CD14-positive monocyte (primary cell): ENCODE measurements at regions of chr2 and their contacts with region 1.

Region 1: GRCh38 chr2:74919827-74920226 is 38.6 kb upstream of the POLE4 start:
- DNase-seq: peak; percentile 47 to 59 (median 49)
- H3K4me3 ChIP-seq: peak overlapping the region in 1 of 3 experiments; percentile 51
- H3K4me3 Mint-ChIP-seq: peak overlapping the region; percentile 56 to 67
- H3K27ac ChIP-seq: no peak overlapping the region
- H3K27ac Mint-ChIP-seq: peak overlapping the region in 1 of 7 donors; percentile 12
- H3K4me1 ChIP-seq: peaks cover 41 to 47% of the 10 kb centered on the region in 2 donors
- H3K4me1 Mint-ChIP-seq: peaks cover 62% of the 10 kb centered on the region
- H3K27me3 ChIP-seq: no peaks in the 10 kb centered on the region
- H3K27me3 Mint-ChIP-seq: peaks cover 2 to 22% (median 11%) of the 10 kb centered on the region in 3 donors
- CTCF ChIP-seq: peak; percentile 93

Region 2: GRCh38 chr2:74778381-74779264 is 141.2 kb before region 1 on chr2:
- intact Hi-C with region 1: no loop called
- DNase-seq: no peak
- H3K4me3 ChIP-seq: no peak overlapping the region
- H3K4me3 Mint-ChIP-seq: no peak overlapping the region
- H3K27ac ChIP-seq: no peak overlapping the region
- H3K27ac Mint-ChIP-seq: no peak overlapping the region
- H3K4me1 ChIP-seq: peaks cover 8 to 12% of the 10 kb centered on the region in 2 donors
- H3K4me1 Mint-ChIP-seq: peaks cover 17% of the 10 kb centered on the region
- H3K27me3 ChIP-seq: no peaks in the 10 kb centered on the region
- H3K27me3 Mint-ChIP-seq: peaks cover 1 to 6% (median 4%) of the 10 kb centered on the region in 3 donors
- CTCF ChIP-seq: no peak

Region 3: GRCh38 chr2:75403991-75404428 is 484.2 kb after region 1 on chr2:
- intact Hi-C with region 1: loop called (anchors 5 kb)
- DNase-seq: peak; percentile 3 to 28 (median 21)
- H3K4me3 ChIP-seq: no peak overlapping the region
- H3K4me3 Mint-ChIP-seq: no peak overlapping the region
- H3K27ac ChIP-seq: no peak overlapping the region
- H3K27ac Mint-ChIP-seq: no peak overlapping the region
- H3K4me1 ChIP-seq: no peaks in the 10 kb centered on the region
- H3K4me1 Mint-ChIP-seq: no peaks in the 10 kb centered on the region
- H3K27me3 ChIP-seq: peaks cover 2 to 12% of the 10 kb centered on the region in 2 donors
- H3K27me3 Mint-ChIP-seq: peaks cover 3 to 29% (median 9%) of the 10 kb centered on the region in 3 donors
- CTCF ChIP-seq: peak; percentile 81

Region 4: GRCh38 chr2:75608684-75609333 is 689.0 kb after region 1 on chr2:
- intact Hi-C with region 1: loop called (anchors 5 to 10 kb)
- DNase-seq: peak; percentile 6 to 31 (median 28)
- H3K4me3 ChIP-seq: no peak overlapping the region
- H3K4me3 Mint-ChIP-seq: peak overlapping the region in 1 of 2 donors; percentile 44
- H3K27ac ChIP-seq: no peak overlapping the region
- H3K27ac Mint-ChIP-seq: no peak overlapping the region
- H3K4me1 ChIP-seq: no peaks in the 10 kb centered on the region
- H3K4me1 Mint-ChIP-seq: peaks cover 3% of the 10 kb centered on the region
- H3K27me3 ChIP-seq: peaks cover 25% of the 10 kb centered on the region in 2 donors
- H3K27me3 Mint-ChIP-seq: peaks cover 33 to 48% (median 34%) of the 10 kb centered on the region in 3 donors
- CTCF ChIP-seq: peak; percentile 89